ENCODE measurements at regions of chr17 and their contacts with region 1.

Region 1: DNA sequence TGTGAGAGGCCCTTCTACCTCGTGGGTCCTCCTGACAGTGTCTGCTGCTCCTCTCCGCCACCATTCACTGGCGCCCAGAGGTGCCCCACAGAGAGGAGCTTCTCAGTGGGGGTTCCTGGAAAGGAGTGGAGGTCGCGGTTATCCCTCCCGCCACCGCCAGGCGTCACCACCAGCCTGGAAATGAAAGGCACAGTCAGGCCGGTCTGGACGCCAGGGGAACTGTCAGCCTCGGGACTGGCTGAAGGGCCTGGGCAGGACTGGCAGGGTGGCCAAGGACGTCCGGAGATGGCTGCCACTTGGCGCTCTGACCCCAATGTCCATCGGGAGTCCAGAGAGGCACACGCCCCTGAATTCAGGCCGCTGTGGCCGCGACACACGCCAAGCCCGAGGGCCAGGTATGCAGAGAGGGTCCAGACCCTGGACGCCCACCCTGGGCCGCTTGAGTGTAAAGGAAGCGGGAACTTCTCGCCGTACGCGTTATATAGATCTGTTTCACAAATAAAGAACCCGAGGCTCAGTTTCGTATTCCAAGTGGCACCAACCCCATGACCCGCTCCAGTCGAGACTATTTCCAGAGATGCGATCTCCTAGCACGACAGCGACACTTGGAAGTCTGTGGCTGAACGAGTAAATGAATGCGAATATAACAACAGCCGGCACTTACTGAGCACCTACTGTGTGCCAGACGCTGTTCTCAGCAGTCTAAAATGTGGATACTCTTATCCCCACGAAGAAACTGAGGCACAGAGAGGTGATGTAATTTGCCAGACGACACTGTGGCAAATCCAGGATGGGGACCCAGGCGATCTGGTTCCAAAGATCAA is 7.6 kb upstream of the NXPH3 start:
- DNase-seq: peak; percentile 74 to 98 (median 88)

Region 2: DNA sequence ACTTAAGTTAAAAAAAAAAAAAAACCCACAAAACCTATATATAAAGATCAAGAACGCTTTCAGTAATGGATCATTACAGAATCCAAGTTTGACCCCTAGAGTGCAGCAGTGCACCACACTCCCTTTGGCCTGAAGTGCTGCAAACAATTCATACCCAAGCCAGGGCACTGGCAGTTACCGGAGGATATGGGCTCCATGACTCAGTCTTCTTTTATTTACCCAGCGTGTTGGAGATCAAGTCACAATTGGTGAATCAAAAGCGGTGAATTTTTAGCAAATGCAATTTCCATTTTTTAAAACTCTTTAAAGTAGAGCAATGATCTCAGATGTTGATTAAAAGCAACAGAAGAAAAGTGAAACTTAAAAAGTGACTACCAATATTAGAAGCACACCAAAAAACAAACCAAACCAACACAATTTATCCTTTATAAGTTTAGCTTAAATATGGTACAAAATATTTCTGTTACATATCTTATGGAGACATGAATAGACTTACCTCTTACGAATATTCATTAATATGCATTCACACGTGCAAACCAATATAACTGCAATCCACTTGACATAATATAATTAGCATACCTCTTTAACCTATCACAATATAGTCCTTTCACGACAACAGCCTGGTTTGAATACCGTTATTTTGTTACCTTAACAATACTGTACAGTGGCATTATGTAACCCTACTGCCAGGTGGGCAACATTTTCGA is 252.4 kb before region 1 on chr17:
- intact Hi-C with region 1: loop called (anchors 5 kb)
- DNase-seq: peak; percentile 40 to 95 (median 76)

Region 3: GRCh38 chr17:49496183-49496866 is 71.8 kb before region 1 on chr17:
- intact Hi-C with region 1: no loop called
- DNase-seq: peak; percentile 32 to 96 (median 78)

Region 4: DNA sequence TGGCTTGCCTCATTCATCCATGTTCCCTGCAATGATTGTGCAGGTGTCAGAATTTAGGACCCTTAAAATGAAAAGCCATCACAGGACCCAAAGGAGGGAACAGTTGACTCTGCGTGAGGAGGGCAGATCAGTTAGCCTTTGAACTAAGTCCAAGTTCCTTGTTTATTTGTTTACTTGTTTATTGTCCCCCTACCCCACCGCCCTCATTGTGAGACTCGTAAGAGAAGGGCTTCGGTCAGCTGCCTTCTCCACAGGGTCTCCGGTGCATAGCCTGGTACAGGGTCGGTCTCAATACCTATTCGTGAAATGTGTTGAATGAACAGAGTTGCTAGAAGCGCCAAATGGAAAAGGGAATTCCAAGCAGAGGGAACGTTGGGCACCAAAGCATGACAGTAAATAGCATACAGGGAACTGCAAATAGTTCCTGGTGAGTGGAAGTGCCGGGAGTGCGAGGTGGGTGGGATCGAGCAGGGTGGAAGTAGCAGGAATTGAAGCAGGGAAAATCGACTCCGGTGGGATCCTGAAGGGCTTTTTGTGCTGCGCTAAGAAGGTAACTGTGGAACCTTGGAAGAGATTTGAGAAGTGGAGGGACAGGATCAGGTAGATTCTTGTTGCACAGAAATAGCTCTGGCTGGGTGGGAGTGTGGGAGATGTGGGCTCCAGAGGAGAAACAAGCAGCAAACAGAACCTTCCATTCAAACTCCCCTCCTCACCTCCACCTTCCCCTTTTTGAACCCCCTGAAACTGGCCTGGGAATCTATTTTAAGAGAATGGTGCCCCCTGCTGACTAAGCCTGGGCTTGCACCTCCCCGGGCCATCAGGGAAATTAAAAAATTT is 127.0 kb after region 1 on chr17:
- intact Hi-C with region 1: loop called (anchors 1 kb)
- DNase-seq: peak in 8 of 10 donors; percentile 19 to 93 (median 63)

Region 5: GRCh38 chr17:49788478-49789242 is 220.6 kb after region 1 on chr17 and contains the start of gene KAT7:
- intact Hi-C with region 1: loop called (anchors 10 kb)
- DNase-seq: peak; percentile 98 to 100 (median 99)

Region 6: GRCh38 chr17:49851387-49852291 is 283.6 kb after region 1 on chr17:
- intact Hi-C with region 1: loop called (anchors 5 kb)
- DNase-seq: peak in 8 of 10 donors; percentile 53 to 92 (median 62)

Region 7: GRCh38 chr17:49997791-49998703 is 430.0 kb after region 1 on chr17:
- intact Hi-C with region 1: loop called (anchors 10 kb)
- DNase-seq: peak in 9 of 10 donors; percentile 38 to 94 (median 70)

Measured in posterior cingulate gyrus (tissue), 11 donors.